Gastrocnemius medialis (tissue), 4 donors: ENCODE measurements at regions of chr3 and their contacts with region 1.

Region 1: DNA sequence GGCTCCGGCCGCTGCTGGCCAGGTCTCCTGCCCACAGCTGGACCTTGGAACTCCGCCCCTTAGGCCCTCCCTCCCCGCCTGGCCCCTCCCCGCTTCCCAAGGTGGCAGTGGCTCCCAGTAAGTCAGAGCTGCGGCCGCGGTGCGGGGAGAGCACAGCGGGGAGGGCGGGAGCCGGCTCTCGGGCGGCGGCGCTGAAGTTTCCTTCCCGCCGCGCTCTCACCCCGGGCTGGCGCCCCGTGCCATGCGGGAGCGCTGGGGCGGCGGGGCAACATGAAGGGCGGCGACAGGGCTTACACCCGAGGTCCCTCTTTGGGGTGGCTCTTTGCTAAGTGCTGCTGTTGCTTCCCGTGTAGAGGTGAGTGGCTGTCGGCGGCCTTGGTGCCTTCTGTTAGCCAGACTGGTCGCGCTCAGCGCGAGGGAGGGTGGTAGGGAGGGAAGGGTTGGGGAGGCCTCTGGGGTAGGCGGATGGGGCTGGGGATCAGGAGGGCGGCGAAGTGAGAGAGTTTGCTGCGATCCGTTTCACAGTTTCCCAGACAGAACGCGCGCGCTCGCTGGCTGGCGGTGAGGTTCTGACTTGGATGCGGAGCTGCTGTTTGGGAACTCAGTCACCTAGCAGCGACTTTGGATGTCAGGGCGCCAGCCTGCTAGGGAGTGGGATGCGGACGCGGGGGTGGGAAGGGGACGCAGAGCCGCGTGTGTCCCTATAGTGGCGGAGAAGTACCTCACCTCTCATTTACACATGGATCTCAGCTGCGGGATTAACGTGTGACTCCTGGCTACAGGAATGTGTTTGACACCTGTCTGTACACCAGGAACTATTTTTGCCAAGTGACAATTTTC is 145.5 kb upstream of the UMPS start:
- DNase-seq: peak; percentile 71 to 89
- ATAC-seq: peak; percentile 89
- H3K4me3 ChIP-seq: peak overlapping the region; percentile 75 to 89 (median 81)
- H3K27ac ChIP-seq: peak overlapping the region; percentile 85 to 95 (median 90)
- H3K4me1 ChIP-seq: peaks cover 18 to 24% of the 10 kb centered on the region in 2 donors
- H3K27me3 ChIP-seq: no peaks in the 10 kb centered on the region
- CTCF ChIP-seq: no peak
- POLR2A ChIP-seq: peak; percentile 84 to 92

Region 2: DNA sequence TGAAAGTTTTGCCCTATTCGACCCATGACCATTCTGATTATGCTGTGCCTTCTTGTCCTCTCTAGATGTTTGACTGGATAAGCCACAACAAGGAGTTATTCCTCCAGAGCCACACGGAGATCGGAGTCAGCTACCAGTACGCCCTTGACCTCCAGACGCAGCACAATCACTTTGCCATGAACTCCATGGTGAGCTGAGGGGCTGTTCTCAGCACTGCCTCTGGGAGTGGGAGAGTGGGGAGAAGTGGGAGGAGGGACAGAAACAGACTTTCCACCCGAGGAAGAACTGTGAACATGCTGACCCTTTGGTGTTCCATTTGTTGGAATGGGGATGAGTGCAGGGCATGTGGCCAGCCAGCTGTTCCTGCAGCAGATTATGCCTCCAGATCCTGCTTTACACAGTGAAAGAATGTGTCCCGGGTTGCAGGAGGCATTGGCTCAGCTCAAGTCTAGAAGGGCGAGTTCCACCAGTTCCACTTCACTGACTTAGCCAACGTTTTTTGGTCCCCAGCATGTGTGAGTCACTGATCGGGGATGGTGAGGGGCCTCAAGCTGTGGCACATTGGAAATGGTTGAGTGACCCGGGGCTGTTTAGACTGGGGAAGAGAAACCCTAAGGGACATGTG is 285.9 kb before region 1 on chr3:
- in situ Hi-C with region 1: no loop called
- intact Hi-C with region 1: no loop called
- DNase-seq: no peak
- ATAC-seq: peak in 1 of 2 donors; percentile 14
- H3K4me3 ChIP-seq: no peak overlapping the region
- H3K27ac ChIP-seq: no peak overlapping the region
- H3K4me1 ChIP-seq: no peaks in the 10 kb centered on the region
- H3K27me3 ChIP-seq: no peaks in the 10 kb centered on the region
- CTCF ChIP-seq: no peak
- POLR2A ChIP-seq: no peak

Region 3: GRCh38 chr3:124599779-124600609 is 15.2 kb after region 1 on chr3:
- in situ Hi-C with region 1: no loop called
- intact Hi-C with region 1: loop called (anchors 2 kb)
- DNase-seq: peak; percentile 11 to 56
- ATAC-seq: peak; percentile 82 to 93
- H3K4me3 ChIP-seq: peak overlapping the region in 3 of 4 donors; percentile 2 to 11 (median 5)
- H3K27ac ChIP-seq: peak overlapping the region; percentile 77 to 88 (median 82)
- H3K4me1 ChIP-seq: peaks cover 41 to 63% of the 10 kb centered on the region in 2 donors
- H3K27me3 ChIP-seq: no peaks in the 10 kb centered on the region
- CTCF ChIP-seq: no peak
- POLR2A ChIP-seq: no peak

Region 4: DNA sequence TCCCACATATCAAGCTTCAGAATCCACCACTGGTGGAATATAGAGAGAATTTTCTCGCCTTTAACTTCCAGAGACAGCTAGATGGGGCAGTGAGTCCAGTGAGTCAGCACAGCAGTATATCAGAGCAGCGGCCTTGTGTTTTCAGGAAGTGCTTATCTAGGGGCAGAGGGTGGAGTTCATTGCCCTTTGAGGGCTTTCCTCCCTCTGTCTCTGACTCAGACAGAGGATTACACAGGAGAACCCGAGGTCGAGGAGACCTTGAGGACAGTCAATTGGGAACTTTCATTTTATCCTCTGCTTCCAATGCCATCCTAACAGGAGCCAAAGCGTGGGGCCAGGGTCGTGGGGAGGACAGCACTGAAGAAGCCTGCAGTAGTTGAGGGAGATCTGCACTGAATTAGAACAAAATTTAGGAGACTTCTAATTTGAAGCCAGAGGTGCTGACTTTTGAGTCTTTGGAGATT is 35.9 kb after region 1 on chr3:
- in situ Hi-C with region 1: no loop called
- intact Hi-C with region 1: loop called (anchors 2 kb)
- DNase-seq: peak in 1 of 2 donors; percentile 40
- ATAC-seq: peak; percentile 57 to 63
- H3K4me3 ChIP-seq: no peak overlapping the region
- H3K27ac ChIP-seq: peak overlapping the region; percentile 60 to 71 (median 65)
- H3K4me1 ChIP-seq: peaks cover 33 to 44% of the 10 kb centered on the region in 2 donors
- H3K27me3 ChIP-seq: no peaks in the 10 kb centered on the region
- CTCF ChIP-seq: no peak
- POLR2A ChIP-seq: no peak

Region 5: DNA sequence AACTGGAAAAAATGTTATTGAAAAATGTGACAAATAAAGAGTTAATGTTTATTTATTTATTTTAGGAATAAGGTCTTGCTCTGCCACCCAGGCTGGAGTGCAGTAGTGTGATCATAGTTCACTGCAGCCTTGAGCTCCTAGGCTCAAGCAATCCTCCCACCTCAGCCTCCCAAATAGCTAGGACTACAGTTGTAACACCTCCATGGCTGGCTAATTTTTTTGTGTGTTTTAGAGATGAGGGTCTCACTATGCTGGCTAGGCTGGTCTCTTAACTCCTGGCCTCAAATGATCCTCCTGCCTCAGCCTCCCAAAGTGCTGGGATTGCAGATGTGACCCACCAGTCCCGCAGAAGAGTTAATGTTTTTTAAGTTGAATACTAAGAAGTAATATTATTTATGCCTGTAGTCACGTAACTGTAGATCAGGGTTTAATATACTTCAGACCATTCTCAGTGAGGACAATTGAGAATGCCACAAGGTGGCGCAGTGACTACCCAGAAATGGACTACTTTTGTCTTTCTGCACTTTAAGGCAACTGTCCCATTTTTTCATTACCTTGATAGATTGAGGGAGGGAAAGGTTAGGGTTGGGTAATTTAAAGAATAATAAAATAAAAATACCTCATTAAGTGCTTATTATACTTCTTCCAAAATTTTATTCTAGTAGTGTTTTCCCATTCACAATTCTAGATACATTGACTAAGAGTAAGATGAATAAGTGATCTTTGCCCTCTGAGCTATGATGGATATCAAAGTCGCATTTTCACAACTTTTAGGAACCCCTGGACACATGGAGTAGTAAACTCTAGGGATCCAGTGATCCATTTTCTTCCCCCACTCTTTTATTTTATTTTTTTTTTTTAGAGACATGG is 343.8 kb after region 1 on chr3:
- in situ Hi-C with region 1: loop called in 1 of 4 experiments (anchors 25 kb)
- intact Hi-C with region 1: no loop called
- DNase-seq: peak in 1 of 2 donors; percentile 35
- ATAC-seq: peak; percentile 30 to 50
- H3K4me3 ChIP-seq: no peak overlapping the region
- H3K27ac ChIP-seq: no peak overlapping the region
- H3K4me1 ChIP-seq: peaks cover 9 to 14% of the 10 kb centered on the region in 2 donors
- H3K27me3 ChIP-seq: no peaks in the 10 kb centered on the region
- CTCF ChIP-seq: peak in 4 of 5 experiments; percentile 35 to 65 (median 52)
- POLR2A ChIP-seq: no peak